Posterior vena cava (tissue), 2 donors: ENCODE measurements at regions of chr17 and their contacts with region 1.

Region 1: GRCh38 chr17:19004421-19005136 is at the start of gene FAM83G:
- DNase-seq: peak; percentile 91
- total RNA-seq, gene FAM83G: 2.8 to 10.9 TPM

Region 2: GRCh38 chr17:18141210-18141803 is 863.3 kb before region 1 on chr17:
- intact Hi-C with region 1: loop called in 1 of 2 experiments (anchors 5 kb)
- DNase-seq: no peak